ENCODE measurements at regions of chr9 and their contacts with region 1.

Region 1: GRCh38 chr9:113401027-113401792 is at the start of gene ALAD:
- DNase-seq: peak; percentile 98 to 100 (median 100)
- ATAC-seq: peak; percentile 99
- H3K4me3 ChIP-seq: peak within 1 kb of the TSS; percentile 80 to 81
- H3K4me3 Mint-ChIP-seq: peak within 1 kb of the TSS; percentile 97
- H3K27ac ChIP-seq: peak within 1 kb of the TSS; percentile 53
- H3K27ac Mint-ChIP-seq: peak within 1 kb of the TSS; percentile 92
- H3K4me1 ChIP-seq: peaks cover 16% of the 10 kb centered on the region
- H3K4me1 Mint-ChIP-seq: peaks cover 28% of the 10 kb centered on the region
- H3K27me3 ChIP-seq: no peaks in the 10 kb centered on the region
- H3K27me3 Mint-ChIP-seq: no peaks in the 10 kb centered on the region
- CTCF ChIP-seq: peak; percentile 94
- total RNA-seq, gene ALAD: 11.2 to 11.5 TPM

Region 2: DNA sequence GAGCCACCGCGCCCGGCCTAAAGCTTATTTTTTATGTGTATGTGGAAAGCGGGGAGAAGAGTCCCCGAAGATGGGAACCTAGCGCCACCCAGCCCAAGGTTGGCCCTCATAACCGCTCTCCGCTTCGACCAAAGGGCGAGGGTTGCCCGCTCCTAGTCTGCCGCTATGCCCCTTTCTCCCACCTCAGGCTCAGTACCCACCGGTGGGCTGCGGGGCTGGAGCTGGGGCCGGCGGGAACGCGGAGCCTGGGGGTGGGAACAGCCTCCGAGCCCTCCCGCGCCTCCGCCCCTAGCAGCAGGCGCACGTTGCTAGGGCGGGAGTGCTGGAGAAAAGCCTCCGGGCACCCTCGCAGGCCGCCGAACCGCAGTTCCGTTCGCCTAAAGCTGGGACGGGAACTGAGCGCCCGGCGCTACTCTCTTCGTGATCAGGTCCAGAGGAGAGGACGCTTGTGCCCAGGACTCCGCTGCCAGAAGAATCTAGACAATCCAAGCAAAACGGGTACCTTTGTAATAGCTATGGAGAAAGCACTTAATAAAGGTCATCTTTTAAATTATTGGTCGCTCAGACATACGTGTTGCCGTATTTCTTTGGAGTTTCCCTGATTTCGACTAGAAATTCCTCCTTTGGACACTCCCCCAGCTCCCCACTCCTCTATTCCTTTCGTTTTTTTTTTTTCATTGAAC is 61.1 kb before region 1 on chr9 and contains the start of gene WDR31:
- CTCF ChIA-PET with region 1: interaction called, 3 read pairs
- POLR2A ChIA-PET with region 1: interaction called, 7 read pairs
- intact Hi-C with region 1: loop called (anchors 1 to 2 kb)
- DNase-seq: peak; percentile 58 to 90 (median 78)
- ATAC-seq: peak; percentile 99
- H3K4me3 ChIP-seq: peak within 1 kb of the TSS; percentile 70 to 83
- H3K4me3 Mint-ChIP-seq: peak within 1 kb of the TSS; percentile 83
- H3K27ac ChIP-seq: peak within 1 kb of the TSS in 1 of 2 experiments; percentile 46
- H3K27ac Mint-ChIP-seq: no peak within 1 kb of the TSS
- H3K4me1 ChIP-seq: peaks cover 19% of the 10 kb centered on the region
- H3K4me1 Mint-ChIP-seq: peaks cover 24% of the 10 kb centered on the region
- H3K27me3 ChIP-seq: peaks cover 0 to 3% of the 10 kb centered on the region in 2 experiments
- H3K27me3 Mint-ChIP-seq: peaks cover 2% of the 10 kb centered on the region
- CTCF ChIP-seq: no peak
- total RNA-seq, gene WDR31: 0.11 to 0.43 TPM